ENCODE measurements at regions of chr18 and their contacts with region 1.

Region 1: GRCh38 chr18:74994502-74995419 is 214.2 kb downstream of the PTGR3 start:
- DNase-seq: no peak
- H3K4me3 Mint-ChIP-seq: peak overlapping the region; percentile 65
- H3K27ac Mint-ChIP-seq: peak overlapping the region; percentile 76
- H3K4me1 Mint-ChIP-seq: peaks cover 51% of the 10 kb centered on the region
- H3K27me3 Mint-ChIP-seq: no peaks in the 10 kb centered on the region

Region 2: GRCh38 chr18:74063023-74063422 is 931.7 kb before region 1 on chr18:
- intact Hi-C with region 1: loop called (anchors 10 kb)
- DNase-seq: no peak
- H3K4me3 Mint-ChIP-seq: peak overlapping the region; percentile 19
- H3K27ac Mint-ChIP-seq: peak overlapping the region; percentile 77
- H3K4me1 Mint-ChIP-seq: peaks cover 50% of the 10 kb centered on the region
- H3K27me3 Mint-ChIP-seq: no peaks in the 10 kb centered on the region

Region 3: DNA sequence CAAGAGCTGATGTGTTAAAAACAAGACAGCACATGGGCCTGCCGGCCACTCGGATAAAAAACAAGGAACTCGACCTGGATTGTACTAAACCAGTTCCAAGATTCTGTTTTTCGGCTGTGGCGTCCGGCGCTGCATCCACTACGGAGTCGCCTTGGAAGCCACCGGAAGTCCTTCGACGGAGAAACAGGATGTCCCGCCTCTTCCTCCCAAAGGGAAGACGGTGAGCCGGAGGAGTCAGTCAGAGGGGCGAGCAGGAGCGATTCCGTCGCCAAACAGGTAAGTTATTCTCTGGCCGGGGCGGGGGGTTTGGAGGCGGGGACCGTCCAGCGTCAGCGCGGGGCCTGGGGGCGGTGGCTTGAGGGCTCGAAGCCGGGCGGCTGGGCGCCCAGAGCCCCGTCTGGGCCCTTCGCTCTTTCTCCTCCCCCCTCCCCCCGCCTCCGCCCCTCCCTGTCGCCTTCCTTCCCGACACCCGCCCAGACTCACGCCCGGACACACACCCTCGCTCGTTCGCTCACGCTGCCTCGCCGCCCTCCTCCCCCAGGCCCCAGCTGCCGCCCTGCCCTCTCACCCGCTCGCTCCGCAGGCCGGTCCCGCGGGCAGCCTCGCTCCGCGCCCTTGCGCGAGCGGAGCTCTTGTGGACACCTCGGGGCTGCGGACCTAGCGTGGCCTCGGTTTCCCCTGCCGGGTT is 397.0 kb before region 1 on chr18 and contains the start of gene ZNF407:
- intact Hi-C with region 1: loop called (anchors 5 kb)
- DNase-seq: peak; percentile 83
- H3K4me3 Mint-ChIP-seq: peak within 1 kb of the TSS; percentile 97
- H3K27ac Mint-ChIP-seq: peak within 1 kb of the TSS; percentile 96
- H3K4me1 Mint-ChIP-seq: peaks cover 45% of the 10 kb centered on the region
- H3K27me3 Mint-ChIP-seq: no peaks in the 10 kb centered on the region
- total RNA-seq, gene ZNF407: 19.8 and 21.4 TPM in 2 replicates

Region 4: GRCh38 chr18:74796841-74797576 is 197.8 kb before region 1 on chr18:
- intact Hi-C with region 1: loop called (anchors 10 kb)
- DNase-seq: no peak
- H3K4me3 Mint-ChIP-seq: no peak overlapping the region
- H3K27ac Mint-ChIP-seq: no peak overlapping the region
- H3K4me1 Mint-ChIP-seq: peaks cover 6% of the 10 kb centered on the region
- H3K27me3 Mint-ChIP-seq: no peaks in the 10 kb centered on the region

Region 5: GRCh38 chr18:74951165-74951760 is 43.5 kb before region 1 on chr18:
- intact Hi-C with region 1: loop called (anchors 2 kb)
- DNase-seq: peak; percentile 14
- H3K4me3 Mint-ChIP-seq: peak overlapping the region; percentile 43
- H3K27ac Mint-ChIP-seq: peak overlapping the region; percentile 75
- H3K4me1 Mint-ChIP-seq: peaks cover 23% of the 10 kb centered on the region
- H3K27me3 Mint-ChIP-seq: no peaks in the 10 kb centered on the region

Region 6: GRCh38 chr18:75052475-75052874 is 57.7 kb after region 1 on chr18:
- intact Hi-C with region 1: no loop called
- DNase-seq: no peak
- H3K4me3 Mint-ChIP-seq: no peak overlapping the region
- H3K27ac Mint-ChIP-seq: no peak overlapping the region
- H3K4me1 Mint-ChIP-seq: peaks cover 6% of the 10 kb centered on the region
- H3K27me3 Mint-ChIP-seq: no peaks in the 10 kb centered on the region

Region 7: DNA sequence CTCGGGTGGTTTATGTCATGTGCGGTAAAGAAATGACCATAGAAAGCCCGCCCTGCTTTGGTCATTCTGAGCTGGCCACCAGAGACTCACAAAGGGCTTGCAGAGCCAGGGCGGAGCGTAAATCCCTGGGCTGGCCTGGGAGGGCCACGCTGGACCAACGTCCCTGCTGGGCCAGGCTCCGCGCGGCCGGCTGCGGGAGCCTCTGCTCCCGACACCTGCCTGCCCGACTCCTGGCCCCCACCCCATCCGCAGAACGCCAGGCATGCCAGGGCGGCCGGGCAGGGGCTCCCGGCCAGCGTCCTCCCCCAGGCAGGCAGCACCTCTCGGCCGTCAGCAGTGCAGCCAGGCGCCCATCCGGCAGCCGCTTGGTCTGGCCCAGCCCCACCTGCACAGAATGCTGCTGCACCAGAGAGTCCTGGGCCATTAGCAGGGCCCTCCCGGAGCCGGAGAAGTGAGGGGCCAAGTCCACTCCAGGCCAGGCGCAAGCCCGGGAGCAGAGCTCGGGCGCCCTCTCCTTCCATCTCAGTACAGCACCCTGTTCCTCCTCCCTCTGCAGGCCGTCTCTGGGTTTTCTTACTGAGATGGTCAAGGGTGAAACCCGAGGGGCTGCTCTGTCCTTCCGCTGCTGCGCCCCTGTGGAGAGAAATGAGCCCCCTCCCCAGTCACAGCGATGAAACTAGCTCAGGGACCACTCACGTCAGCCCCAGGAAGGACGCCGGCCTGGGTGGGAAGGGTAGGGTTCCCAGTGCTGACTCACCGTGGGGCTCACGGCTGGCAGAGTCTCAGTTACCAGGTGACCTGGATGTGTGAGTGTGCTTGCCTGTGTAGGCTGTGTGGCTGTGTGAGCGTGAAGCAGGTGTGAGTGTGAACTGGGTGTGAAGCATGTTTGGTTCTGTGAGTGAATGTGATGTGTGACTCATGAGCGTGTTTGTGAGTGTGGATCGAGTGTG is 130.9 kb after region 1 on chr18:
- intact Hi-C with region 1: no loop called
- DNase-seq: no peak
- H3K4me3 Mint-ChIP-seq: no peak overlapping the region
- H3K27ac Mint-ChIP-seq: no peak overlapping the region
- H3K4me1 Mint-ChIP-seq: peaks cover 5% of the 10 kb centered on the region
- H3K27me3 Mint-ChIP-seq: no peaks in the 10 kb centered on the region

Region 8: GRCh38 chr18:75247611-75248421 is 253.1 kb after region 1 on chr18:
- intact Hi-C with region 1: loop called (anchors 2 kb)
- DNase-seq: no peak
- H3K4me3 Mint-ChIP-seq: peak overlapping the region; percentile 88
- H3K27ac Mint-ChIP-seq: peak overlapping the region; percentile 15
- H3K4me1 Mint-ChIP-seq: peaks cover 39% of the 10 kb centered on the region
- H3K27me3 Mint-ChIP-seq: peaks cover 2% of the 10 kb centered on the region